ENCODE measurements at regions of chr17 and their contacts with region 1.

Region 1: GRCh38 chr17:78745407-78746088 is 36.5 kb downstream of the CYTH1 start:
- DNase-seq: peak in 7 of 9 donors; percentile 48 to 67 (median 56)
- ATAC-seq: peak; percentile 13
- H3K4me3 ChIP-seq: peak overlapping the region; percentile 6
- H3K4me3 Mint-ChIP-seq: peak overlapping the region; percentile 53 to 93 (median 86)
- H3K27ac ChIP-seq: peak overlapping the region; percentile 81
- H3K27ac Mint-ChIP-seq: peak overlapping the region; percentile 62 to 98 (median 95)
- H3K4me1 ChIP-seq: peaks cover 92 to 94% of the 10 kb centered on the region in 2 donors
- H3K4me1 Mint-ChIP-seq: peaks cover 77 to 100% (median 93%) of the 10 kb centered on the region in 7 donors
- H3K27me3 ChIP-seq: no peaks in the 10 kb centered on the region
- H3K27me3 Mint-ChIP-seq: no peaks in the 10 kb centered on the region

Region 2: GRCh38 chr17:78689029-78689428 is 56.5 kb before region 1 on chr17:
- CTCF ChIA-PET with region 1: no interaction called
- POLR2A ChIA-PET with region 1: no interaction called
- intact Hi-C with region 1: no loop called
- DNase-seq: peak in 1 of 9 donors; percentile 20
- ATAC-seq: peak; percentile 49
- H3K4me3 ChIP-seq: no peak overlapping the region
- H3K4me3 Mint-ChIP-seq: no peak overlapping the region
- H3K27ac ChIP-seq: no peak overlapping the region
- H3K27ac Mint-ChIP-seq: peak overlapping the region in 8 of 9 donors; percentile 7 to 86 (median 58)
- H3K4me1 ChIP-seq: no peaks in the 10 kb centered on the region
- H3K4me1 Mint-ChIP-seq: peaks cover 0 to 32% (median 18%) of the 10 kb centered on the region in 7 donors
- H3K27me3 ChIP-seq: no peaks in the 10 kb centered on the region
- H3K27me3 Mint-ChIP-seq: no peaks in the 10 kb centered on the region

Region 3: GRCh38 chr17:78708510-78708973 is 37.0 kb before region 1 on chr17:
- CTCF ChIA-PET with region 1: interaction called, 10 read pairs
- POLR2A ChIA-PET with region 1: interaction called, 7 read pairs
- intact Hi-C with region 1: loop called (anchors 1 to 5 kb)
- DNase-seq: peak; percentile 33 to 69 (median 58)
- ATAC-seq: peak; percentile 84
- H3K4me3 ChIP-seq: no peak overlapping the region
- H3K4me3 Mint-ChIP-seq: peak overlapping the region in 9 of 10 donors; percentile 30 to 80 (median 67)
- H3K27ac ChIP-seq: peak overlapping the region; percentile 56
- H3K27ac Mint-ChIP-seq: peak overlapping the region; percentile 30 to 95 (median 87)
- H3K4me1 ChIP-seq: peaks cover 35 to 39% of the 10 kb centered on the region in 2 donors
- H3K4me1 Mint-ChIP-seq: peaks cover 28 to 73% (median 64%) of the 10 kb centered on the region in 7 donors
- H3K27me3 ChIP-seq: no peaks in the 10 kb centered on the region
- H3K27me3 Mint-ChIP-seq: no peaks in the 10 kb centered on the region

Region 4: DNA sequence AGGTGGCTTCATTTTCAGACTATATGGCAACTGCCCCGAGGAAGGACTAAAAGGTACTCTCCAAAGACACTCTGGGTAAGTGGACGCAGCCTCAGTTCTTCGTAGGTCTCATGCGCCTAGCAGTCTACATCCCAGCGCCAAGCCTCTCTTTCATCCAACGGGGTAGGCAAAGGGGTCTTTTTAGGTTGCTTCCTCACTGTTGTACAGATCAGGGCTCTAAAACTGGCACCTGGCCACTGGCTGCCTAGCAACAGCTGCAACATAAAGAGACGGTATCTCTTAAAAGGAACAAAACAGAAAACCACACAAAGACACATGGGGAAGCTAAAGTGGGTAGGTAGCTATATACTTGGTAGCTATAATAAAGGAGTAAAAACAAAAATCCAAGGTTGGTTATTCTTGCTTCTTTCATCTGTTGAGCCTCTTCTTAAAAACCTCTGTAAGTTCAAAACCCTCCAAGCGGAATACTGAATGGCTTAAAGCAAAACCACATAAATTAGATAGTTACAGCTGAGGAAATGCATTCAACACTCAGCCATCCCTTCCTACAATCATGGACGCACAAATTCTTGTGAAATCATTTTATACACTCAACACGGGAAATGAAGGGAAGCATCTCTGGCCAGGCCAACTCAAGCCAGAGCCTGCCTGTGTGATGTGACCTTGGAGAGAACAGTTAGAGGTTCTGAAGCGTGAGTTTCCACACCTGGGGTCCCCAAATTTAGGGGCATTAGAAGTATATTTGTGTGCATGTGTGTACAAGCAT is 13.8 kb after region 1 on chr17:
- CTCF ChIA-PET with region 1: interaction called, 8 read pairs
- POLR2A ChIA-PET with region 1: interaction called, 122 read pairs
- intact Hi-C with region 1: loop called (anchors 1 kb)
- DNase-seq: peak; percentile 56 to 96 (median 93)
- ATAC-seq: peak; percentile 91
- H3K4me3 ChIP-seq: peak overlapping the region; percentile 53
- H3K4me3 Mint-ChIP-seq: peak overlapping the region; percentile 64 to 85 (median 80)
- H3K27ac ChIP-seq: peak overlapping the region; percentile 93
- H3K27ac Mint-ChIP-seq: peak overlapping the region; percentile 83 to 98 (median 97)
- H3K4me1 ChIP-seq: peaks cover 75 to 77% of the 10 kb centered on the region in 2 donors
- H3K4me1 Mint-ChIP-seq: peaks cover 43 to 88% (median 83%) of the 10 kb centered on the region in 7 donors
- H3K27me3 ChIP-seq: no peaks in the 10 kb centered on the region
- H3K27me3 Mint-ChIP-seq: no peaks in the 10 kb centered on the region

Region 5: GRCh38 chr17:78774956-78775571 is 29.5 kb after region 1 on chr17:
- CTCF ChIA-PET with region 1: interaction called, 6 read pairs
- POLR2A ChIA-PET with region 1: interaction called, 122 read pairs
- intact Hi-C with region 1: loop called (anchors 1 kb)
- DNase-seq: peak in 7 of 9 donors; percentile 49 to 71 (median 55)
- ATAC-seq: peak; percentile 55
- H3K4me3 ChIP-seq: peak overlapping the region; percentile 55
- H3K4me3 Mint-ChIP-seq: peak overlapping the region in 8 of 10 donors; percentile 85 to 98 (median 92)
- H3K27ac ChIP-seq: peak overlapping the region; percentile 81
- H3K27ac Mint-ChIP-seq: peak overlapping the region in 8 of 9 donors; percentile 91 to 98 (median 97)
- H3K4me1 ChIP-seq: peaks cover 67 to 71% of the 10 kb centered on the region in 2 donors
- H3K4me1 Mint-ChIP-seq: peaks cover 34 to 79% (median 69%) of the 10 kb centered on the region in 7 donors
- H3K27me3 ChIP-seq: no peaks in the 10 kb centered on the region
- H3K27me3 Mint-ChIP-seq: no peaks in the 10 kb centered on the region

Region 6: DNA sequence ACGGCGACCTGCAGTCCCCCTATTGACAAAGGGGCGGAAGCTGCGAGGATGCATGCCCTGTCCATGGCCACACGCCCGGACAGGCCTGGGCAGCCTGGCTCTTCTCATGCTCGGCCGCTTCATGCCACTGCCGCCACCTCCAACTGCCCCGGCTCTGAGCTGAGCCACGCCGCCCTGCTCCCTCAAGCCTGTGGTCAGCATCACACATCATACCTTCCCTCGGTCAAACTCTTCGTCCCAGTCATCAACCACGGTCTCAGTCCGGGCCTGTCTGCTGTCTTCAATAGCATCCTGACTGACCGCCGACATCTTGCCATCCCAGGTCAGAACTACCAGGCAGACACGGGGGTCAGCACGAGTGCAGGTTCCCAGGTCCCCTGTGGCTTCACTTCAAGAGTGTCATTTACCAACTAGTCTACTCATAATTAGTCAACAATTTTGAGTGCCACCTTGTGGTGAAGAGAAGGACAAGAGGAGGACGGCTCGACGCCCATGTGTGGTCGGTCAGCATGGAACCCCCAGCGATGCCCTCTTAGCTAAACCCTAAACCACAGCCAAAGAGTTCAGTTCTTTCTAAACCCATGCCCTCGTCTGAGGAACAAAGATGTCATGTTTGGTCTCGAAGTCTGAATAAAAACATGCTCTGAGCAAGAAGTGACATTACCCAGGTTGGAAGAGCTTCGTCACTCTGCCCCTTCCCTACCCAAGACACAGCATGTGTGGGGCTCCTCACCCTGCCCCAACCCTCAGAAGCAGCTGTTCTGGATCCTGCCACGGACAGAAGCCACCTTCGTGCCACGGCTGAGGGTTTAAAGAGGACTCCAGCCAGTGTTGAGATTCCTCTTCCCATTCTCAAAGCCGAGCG is 53.4 kb after region 1 on chr17:
- CTCF ChIA-PET with region 1: interaction called, 9 read pairs
- POLR2A ChIA-PET with region 1: interaction called, 6 read pairs
- intact Hi-C with region 1: loop called in 1 of 2 experiments (anchors 1 kb)
- DNase-seq: peak in 5 of 9 donors; percentile 54 to 65 (median 59)
- ATAC-seq: peak; percentile 56
- H3K4me3 ChIP-seq: no peak overlapping the region
- H3K4me3 Mint-ChIP-seq: peak overlapping the region in 8 of 10 donors; percentile 11 to 60 (median 45)
- H3K27ac ChIP-seq: no peak overlapping the region
- H3K27ac Mint-ChIP-seq: peak overlapping the region; percentile 68 to 95 (median 86)
- H3K4me1 ChIP-seq: peaks cover 7 to 27% of the 10 kb centered on the region in 2 donors
- H3K4me1 Mint-ChIP-seq: peaks cover 42 to 78% (median 63%) of the 10 kb centered on the region in 7 donors
- H3K27me3 ChIP-seq: no peaks in the 10 kb centered on the region
- H3K27me3 Mint-ChIP-seq: no peaks in the 10 kb centered on the region

Measured in naive thymus-derived CD4-positive, alpha-beta T cell (primary cell).